Aorta (tissue), 5 donors: ENCODE measurements at regions of chr1 and their contacts with region 1.

Region 1: GRCh38 chr1:175742790-175743459 is 470 bp downstream of the TNR start:
- DNase-seq: no peak
- ATAC-seq: no peak
- H3K4me3 ChIP-seq: no peak overlapping the region
- H3K27ac ChIP-seq: no peak overlapping the region
- H3K4me1 ChIP-seq: no peaks in the 10 kb centered on the region
- H3K27me3 ChIP-seq: peaks cover 0 to 2% of the 10 kb centered on the region in 2 donors

Region 2: GRCh38 chr1:175471039-175471800 is 271.7 kb before region 1 on chr1:
- intact Hi-C with region 1: loop called in 1 of 2 experiments (anchors 10 kb)
- DNase-seq: no peak
- ATAC-seq: no peak
- H3K4me3 ChIP-seq: no peak overlapping the region
- H3K27ac ChIP-seq: no peak overlapping the region
- H3K4me1 ChIP-seq: no peaks in the 10 kb centered on the region
- H3K27me3 ChIP-seq: no peaks in the 10 kb centered on the region